Aorta (tissue), 5 donors: ENCODE measurements at regions of chr4 and their contacts with region 1.

Region 1: DNA sequence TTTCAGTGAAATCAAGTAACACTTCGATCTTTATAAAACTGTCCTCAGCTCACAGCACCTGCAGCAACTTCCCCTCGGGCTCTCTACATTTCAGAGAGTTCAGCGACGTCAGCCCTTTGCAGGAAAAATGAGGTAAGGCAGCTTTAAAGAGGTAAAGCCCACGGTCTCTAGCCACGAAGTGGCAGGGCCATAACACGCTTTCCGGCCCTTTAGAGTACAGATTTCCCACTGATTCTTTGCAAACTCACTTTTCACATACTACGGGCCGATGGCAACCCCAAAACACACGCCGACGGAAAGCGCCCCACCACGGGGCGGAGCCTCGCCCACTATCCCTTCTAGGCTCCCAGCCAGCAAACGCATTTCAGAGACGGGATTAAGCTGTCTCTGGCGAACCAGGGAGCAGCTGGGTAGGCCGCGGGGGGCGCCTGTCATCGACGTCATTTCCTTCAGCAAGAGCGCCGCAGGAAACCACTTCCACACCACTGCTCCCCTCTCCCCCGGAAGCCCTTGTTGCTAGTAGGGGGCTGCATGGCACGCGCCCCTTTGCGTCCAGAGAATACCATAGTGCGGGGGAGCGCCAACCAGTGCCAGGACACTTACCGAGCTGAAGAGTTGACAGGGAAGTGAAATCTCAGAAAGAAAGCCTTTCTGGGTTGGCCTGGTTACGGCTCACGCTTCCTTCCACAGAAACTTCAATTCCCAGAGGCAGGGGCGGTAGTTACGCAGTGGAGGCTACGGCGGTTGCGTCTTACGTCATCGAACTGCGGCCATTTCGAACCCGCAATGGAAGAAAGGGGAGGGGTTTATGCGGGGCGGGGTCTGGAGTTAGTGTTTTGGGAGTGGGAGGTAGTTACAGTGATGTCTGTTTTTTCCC is at the start of gene TRMT10A:
- DNase-seq: peak; percentile 99
- ATAC-seq: peak; percentile 99
- H3K4me3 ChIP-seq: peak within 1 kb of the TSS; percentile 66 to 75
- H3K27ac ChIP-seq: peak within 1 kb of the TSS; percentile 36 to 97
- H3K4me1 ChIP-seq: peaks cover 0 to 3% of the 10 kb centered on the region in 2 donors
- H3K27me3 ChIP-seq: no peaks in the 10 kb centered on the region
- total RNA-seq, gene TRMT10A: 3.3 to 3.7 TPM

Region 2: DNA sequence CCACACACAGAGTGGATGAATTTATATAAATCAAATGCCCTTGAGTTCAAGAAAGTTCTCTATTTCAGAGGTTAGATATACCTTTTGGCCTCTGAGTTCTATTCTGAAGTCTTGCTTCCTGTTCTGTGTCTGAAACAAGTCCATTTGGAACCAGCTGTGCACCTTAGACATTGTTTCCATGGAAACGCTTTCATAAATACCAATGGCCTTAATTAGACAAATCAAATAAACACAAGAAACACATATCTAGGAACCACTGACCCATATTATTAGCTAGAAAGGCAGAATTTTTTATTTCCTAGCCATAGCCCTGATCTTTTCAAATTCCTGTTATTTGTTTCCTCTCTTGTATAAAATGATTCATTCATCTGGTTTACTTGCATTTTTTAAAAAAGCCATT is 102.4 kb after region 1 on chr4:
- intact Hi-C with region 1: loop called in 1 of 2 experiments (anchors 5 kb)
- DNase-seq: no peak
- ATAC-seq: no peak
- H3K4me3 ChIP-seq: no peak overlapping the region
- H3K27ac ChIP-seq: no peak overlapping the region
- H3K4me1 ChIP-seq: peaks cover 0 to 2% of the 10 kb centered on the region in 2 donors
- H3K27me3 ChIP-seq: no peaks in the 10 kb centered on the region

Region 3: DNA sequence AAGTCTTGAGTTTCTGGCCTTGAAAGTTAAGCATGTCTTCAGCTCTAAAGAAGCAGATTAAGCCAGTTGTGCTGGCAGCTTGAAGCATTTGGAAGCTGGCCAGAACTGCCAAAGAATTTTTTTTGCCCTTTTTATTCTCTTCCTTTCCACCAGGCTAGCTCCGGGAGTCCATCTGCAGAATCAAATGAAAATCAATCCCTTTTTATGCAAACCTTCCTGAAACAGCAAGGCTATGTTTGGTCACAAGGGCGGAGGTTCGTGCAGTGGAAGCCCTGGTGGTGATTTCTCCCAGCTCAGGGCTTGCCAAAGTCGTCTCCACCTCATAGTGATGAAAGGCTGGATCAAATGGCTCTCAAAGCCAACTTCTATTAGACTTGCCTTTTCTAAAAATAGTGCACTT is 115.7 kb after region 1 on chr4:
- intact Hi-C with region 1: no loop called
- DNase-seq: no peak
- ATAC-seq: peak; percentile 52
- H3K4me3 ChIP-seq: no peak overlapping the region
- H3K27ac ChIP-seq: no peak overlapping the region
- H3K4me1 ChIP-seq: peaks cover 0 to 2% of the 10 kb centered on the region in 2 donors
- H3K27me3 ChIP-seq: no peaks in the 10 kb centered on the region

Region 4: GRCh38 chr4:99763635-99764101 is 200.1 kb after region 1 on chr4:
- intact Hi-C with region 1: loop called in 1 of 2 experiments (anchors 5 kb)
- DNase-seq: peak in 1 of 2 donors; percentile 50
- ATAC-seq: peak; percentile 83
- H3K4me3 ChIP-seq: no peak overlapping the region
- H3K27ac ChIP-seq: no peak overlapping the region
- H3K4me1 ChIP-seq: peaks cover 4 to 7% of the 10 kb centered on the region in 2 donors
- H3K27me3 ChIP-seq: no peaks in the 10 kb centered on the region

Region 5: GRCh38 chr4:99885063-99885664 is 321.6 kb after region 1 on chr4:
- intact Hi-C with region 1: loop called (anchors 5 kb)
- DNase-seq: no peak
- ATAC-seq: no peak
- H3K4me3 ChIP-seq: no peak overlapping the region
- H3K27ac ChIP-seq: no peak overlapping the region
- H3K4me1 ChIP-seq: no peaks in the 10 kb centered on the region
- H3K27me3 ChIP-seq: no peaks in the 10 kb centered on the region

Region 6: GRCh38 chr4:99949034-99949998 is 385.8 kb after region 1 on chr4:
- intact Hi-C with region 1: loop called (anchors 2 kb)
- DNase-seq: peak; percentile 93
- ATAC-seq: peak; percentile 69
- H3K4me3 ChIP-seq: peak overlapping the region; percentile 72 to 90
- H3K27ac ChIP-seq: peak overlapping the region in 1 of 2 donors; percentile 81
- H3K4me1 ChIP-seq: no peaks in the 10 kb centered on the region
- H3K27me3 ChIP-seq: no peaks in the 10 kb centered on the region